Right ventricle myocardium inferior (tissue), 1 donor: ENCODE measurements at regions of chr4 and their contacts with region 1.

Region 1: GRCh38 chr4:87006676-87007527 is 72.1 kb downstream of the AFF1 start:
- DNase-seq: peak; percentile 97
- ATAC-seq: peak; percentile 95

Region 2: GRCh38 chr4:86934771-86935565 is 71.9 kb before region 1 on chr4 and contains the start of gene AFF1:
- intact Hi-C with region 1: loop called (anchors 1 kb)
- DNase-seq: peak; percentile 96
- ATAC-seq: peak; percentile 96
- total RNA-seq, gene AFF1: 73.3 TPM

Region 3: DNA sequence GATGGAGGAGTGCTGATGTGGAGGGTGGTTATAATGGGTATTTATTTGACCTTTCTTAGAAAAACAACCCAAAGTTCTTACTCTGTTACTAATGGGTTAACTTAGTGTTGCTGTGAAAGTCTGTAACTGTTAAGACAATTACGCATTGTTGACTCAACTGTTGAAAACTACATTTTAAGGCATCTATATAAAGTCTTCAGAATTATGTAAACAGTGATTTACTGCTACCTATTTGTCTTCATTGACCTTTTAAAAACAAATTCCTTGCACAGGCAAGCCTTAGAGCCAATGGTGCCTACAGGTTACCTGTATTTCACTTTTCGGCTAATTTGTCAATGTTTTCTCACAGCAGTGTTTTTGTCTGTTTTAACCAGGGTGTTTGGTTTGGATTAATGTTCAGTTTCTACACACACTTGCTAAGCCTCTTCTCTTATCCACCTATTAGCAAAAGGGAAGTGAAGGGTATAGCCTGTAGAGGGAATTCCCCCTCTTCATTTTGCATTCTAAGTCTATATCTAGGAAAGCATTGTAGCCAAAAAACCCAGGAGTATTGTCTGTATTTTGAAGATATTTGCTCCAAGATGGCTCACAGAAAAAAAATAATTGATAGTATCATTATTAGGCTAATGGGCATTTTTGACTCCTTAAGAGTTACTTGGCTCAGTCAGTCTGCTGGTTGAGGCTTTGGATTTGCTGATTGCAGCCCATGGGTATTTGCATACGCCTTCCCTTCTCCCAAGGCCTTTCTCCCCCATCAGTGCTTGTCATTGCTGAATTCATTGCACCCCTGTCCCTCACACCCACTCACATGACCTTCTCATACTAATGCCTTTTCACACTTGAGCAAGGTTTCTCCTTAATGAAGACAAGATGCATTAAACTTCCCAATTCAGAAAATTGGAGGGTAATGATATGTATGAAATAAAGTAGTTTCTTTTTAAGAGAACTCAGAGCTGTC is 41.6 kb before region 1 on chr4:
- intact Hi-C with region 1: loop called (anchors 5 kb)
- DNase-seq: no peak
- ATAC-seq: no peak

Region 4: DNA sequence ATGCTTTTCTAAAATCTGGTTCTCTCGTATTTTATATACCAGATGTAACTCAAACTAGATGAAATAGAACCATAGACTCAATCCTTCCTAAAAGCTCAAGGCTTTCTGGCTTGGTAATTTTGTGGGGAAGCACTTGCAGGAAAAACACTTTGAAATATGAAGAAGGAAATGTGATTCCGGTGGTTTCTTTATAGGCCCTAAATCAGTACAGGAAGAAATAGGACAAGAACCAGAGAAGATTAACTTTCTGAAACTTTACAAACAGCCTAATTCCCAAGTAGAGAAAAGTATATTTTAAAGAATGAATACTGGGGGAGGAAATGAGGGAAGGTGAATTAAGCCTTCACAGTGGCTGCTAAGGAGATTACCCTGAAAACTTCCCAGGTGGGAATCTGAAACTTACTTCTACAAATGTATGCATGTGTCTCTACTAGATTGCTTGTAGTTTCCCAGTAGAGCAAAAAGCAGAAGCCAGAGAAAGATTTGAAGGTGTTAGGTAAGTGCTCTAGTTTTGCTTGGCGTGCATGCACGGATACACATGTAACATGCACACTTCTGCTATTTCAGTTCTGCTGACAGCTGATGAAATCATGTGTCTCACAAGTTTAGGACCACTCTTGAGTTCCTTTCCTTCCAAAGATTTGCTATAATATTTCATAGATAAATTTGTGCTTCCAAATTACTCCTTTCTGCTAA is 20.0 kb after region 1 on chr4:
- intact Hi-C with region 1: loop called (anchors 2 kb)
- DNase-seq: no peak
- ATAC-seq: peak; percentile 24

Region 5: GRCh38 chr4:87043044-87043820 is 36.3 kb after region 1 on chr4:
- intact Hi-C with region 1: no loop called
- DNase-seq: no peak
- ATAC-seq: no peak

Region 6: DNA sequence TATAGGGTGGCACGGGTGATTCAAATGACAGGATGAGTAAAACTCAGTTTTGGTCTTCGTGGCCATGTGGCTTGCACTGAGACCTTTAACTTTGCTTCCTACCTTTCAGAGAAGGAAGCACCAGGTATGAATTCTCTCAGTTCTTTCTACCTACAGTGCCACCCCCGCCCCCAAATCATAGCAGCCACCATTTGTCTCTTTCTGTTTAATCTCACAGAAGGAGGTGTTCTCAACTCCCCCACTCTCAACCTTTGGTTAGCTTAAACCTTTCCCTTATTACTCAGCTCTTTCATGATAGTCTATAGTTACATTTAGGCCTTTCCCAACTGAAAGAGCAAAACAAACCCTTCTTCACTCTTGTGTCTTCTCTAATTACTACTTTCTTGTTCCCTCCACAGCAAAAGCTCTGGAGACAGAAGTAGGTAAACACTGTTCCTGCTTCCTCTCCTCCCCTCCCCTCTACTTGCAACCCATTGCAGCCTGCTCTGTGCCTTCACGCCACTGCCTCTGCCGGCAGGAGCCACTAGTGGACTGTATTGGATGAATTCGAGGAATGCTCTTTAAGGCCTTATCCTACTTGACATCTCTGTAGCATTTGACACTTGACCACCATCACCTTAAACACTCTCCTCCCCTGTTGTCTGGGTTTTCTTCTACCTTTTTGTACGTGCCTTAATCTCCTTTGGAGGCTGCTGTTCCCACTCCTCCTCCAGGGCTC is 51.6 kb after region 1 on chr4:
- intact Hi-C with region 1: loop called (anchors 5 kb)
- DNase-seq: no peak
- ATAC-seq: peak; percentile 42

Region 7: DNA sequence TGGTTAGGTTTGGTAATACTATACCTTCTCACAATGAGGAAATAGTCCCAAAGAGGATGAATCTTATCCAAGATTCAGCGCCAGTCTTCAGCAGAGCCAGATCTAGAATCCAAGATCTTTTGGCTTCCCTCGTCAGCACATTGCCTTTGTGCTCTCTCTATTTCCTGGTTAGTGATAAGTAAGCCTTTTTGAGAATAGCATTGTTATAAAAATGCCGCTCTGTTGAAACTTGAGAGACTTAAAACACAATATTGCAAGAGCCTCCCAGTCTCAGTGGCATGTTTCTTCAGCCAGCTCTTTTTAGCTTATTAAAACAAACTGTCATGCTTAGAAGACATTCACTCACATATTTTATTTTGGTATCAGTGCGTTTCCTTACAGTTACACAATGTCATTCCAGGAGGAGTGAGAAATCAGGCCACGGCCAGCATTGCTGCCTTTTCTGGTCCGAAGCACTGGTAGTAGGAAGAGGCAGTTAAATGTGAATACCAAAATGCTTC is 72.1 kb after region 1 on chr4:
- intact Hi-C with region 1: loop called (anchors 5 kb)
- DNase-seq: no peak
- ATAC-seq: peak; percentile 81

Region 8: GRCh38 chr4:87093443-87094123 is 86.7 kb after region 1 on chr4:
- intact Hi-C with region 1: loop called (anchors 2 kb)
- DNase-seq: no peak
- ATAC-seq: peak; percentile 74

Region 9: DNA sequence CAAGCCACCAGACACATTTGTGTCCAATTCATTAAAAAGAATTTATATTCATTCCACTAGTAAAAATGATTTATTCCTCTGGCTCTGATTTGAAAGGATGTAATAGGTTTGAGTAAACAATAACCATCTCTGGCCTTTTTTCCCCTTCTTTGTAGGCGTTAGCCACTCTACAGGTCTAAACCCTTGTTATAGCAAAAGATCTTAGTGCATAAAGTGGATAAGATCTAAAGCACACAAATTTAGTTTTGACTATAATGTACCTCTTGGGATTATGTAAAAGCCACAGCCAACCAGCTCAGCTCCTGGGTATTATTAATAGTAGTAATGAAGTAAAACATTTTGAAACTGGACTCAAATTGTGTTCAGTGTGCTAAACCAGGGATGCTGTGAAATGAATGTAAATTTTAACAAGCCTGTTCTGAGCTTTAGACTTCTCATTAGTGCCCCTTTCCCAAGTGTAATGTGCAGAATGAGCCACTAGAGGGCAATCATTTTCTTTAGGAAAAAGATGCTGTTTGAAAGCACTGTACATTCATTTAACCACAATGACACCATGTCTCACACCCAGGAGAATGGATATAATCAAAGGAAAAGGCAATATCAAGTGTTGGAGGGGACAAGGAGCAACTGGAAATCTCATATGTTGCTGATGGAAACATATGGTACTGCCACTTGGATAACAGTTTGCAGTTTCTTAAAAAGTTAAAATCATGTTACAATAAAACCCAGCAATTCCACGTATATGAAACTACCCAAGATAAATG is 143.8 kb after region 1 on chr4:
- intact Hi-C with region 1: no loop called
- DNase-seq: no peak
- ATAC-seq: peak; percentile 67